ENCODE measurements at regions of chr2 and their contacts with region 1.

Region 1: GRCh38 chr2:16608661-16609643 is 56.7 kb downstream of the CYRIA start:
- DNase-seq: peak; percentile 86
- H3K4me3 ChIP-seq: peak overlapping the region in 2 of 3 experiments; percentile 21 to 57
- H3K27ac ChIP-seq: peak overlapping the region; percentile 21
- H3K4me1 ChIP-seq: peaks cover 8% of the 10 kb centered on the region
- H3K27me3 ChIP-seq: no peaks in the 10 kb centered on the region
- CTCF ChIP-seq: peak; percentile 80 to 98
- POLR2A ChIP-seq: no peak

Region 2: GRCh38 chr2:15730545-15731212 is 878.3 kb before region 1 on chr2:
- CTCF ChIA-PET with region 1: no interaction called
- POLR2A ChIA-PET with region 1: no interaction called
- dilution Hi-C with region 1: no loop called
- intact Hi-C with region 1: loop called (anchors 10 kb)
- DNase-seq: peak; percentile 97
- H3K4me3 ChIP-seq: no peak overlapping the region
- H3K27ac ChIP-seq: peak overlapping the region; percentile 24
- H3K4me1 ChIP-seq: peaks cover 31% of the 10 kb centered on the region
- H3K27me3 ChIP-seq: peaks cover 0 to 1% of the 10 kb centered on the region in 2 experiments
- CTCF ChIP-seq: no peak
- POLR2A ChIP-seq: peak; percentile 24

Region 3: GRCh38 chr2:16553226-16553625 is 55.7 kb before region 1 on chr2:
- CTCF ChIA-PET with region 1: interaction called, 33 read pairs
- POLR2A ChIA-PET with region 1: no interaction called
- dilution Hi-C with region 1: no loop called
- intact Hi-C with region 1: loop called (anchors 1 kb)
- DNase-seq: peak; percentile 51
- H3K4me3 ChIP-seq: no peak overlapping the region
- H3K27ac ChIP-seq: no peak overlapping the region
- H3K4me1 ChIP-seq: no peaks in the 10 kb centered on the region
- H3K27me3 ChIP-seq: no peaks in the 10 kb centered on the region
- CTCF ChIP-seq: peak; percentile 66 to 71
- POLR2A ChIP-seq: no peak

Region 4: DNA sequence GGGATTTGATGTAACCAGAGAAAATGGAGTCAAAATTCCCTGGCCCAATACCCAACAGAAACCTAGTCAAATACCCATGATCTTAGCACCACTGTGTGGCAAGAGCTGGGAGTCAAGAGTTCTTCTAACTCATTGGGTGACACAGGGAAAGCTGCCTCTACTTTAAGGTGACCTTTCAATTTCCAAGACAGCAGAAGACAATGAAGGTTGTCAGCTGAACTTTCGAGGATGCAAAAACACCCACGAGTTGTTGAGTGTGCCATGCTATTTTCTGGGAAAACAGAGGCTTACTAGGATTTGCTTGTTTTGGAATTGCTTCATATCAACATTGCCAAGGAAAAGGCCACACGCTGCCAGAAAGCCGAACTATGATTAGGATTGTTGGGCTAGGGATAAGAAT is 118.3 kb after region 1 on chr2:
- CTCF ChIA-PET with region 1: interaction called, 30 read pairs
- POLR2A ChIA-PET with region 1: no interaction called
- dilution Hi-C with region 1: no loop called
- intact Hi-C with region 1: loop called (anchors 1 kb)
- DNase-seq: peak; percentile 56
- H3K4me3 ChIP-seq: no peak overlapping the region
- H3K27ac ChIP-seq: no peak overlapping the region
- H3K4me1 ChIP-seq: no peaks in the 10 kb centered on the region
- H3K27me3 ChIP-seq: peaks cover 2 to 18% of the 10 kb centered on the region in 2 experiments
- CTCF ChIP-seq: peak; percentile 10 to 39
- POLR2A ChIP-seq: no peak

Region 5: DNA sequence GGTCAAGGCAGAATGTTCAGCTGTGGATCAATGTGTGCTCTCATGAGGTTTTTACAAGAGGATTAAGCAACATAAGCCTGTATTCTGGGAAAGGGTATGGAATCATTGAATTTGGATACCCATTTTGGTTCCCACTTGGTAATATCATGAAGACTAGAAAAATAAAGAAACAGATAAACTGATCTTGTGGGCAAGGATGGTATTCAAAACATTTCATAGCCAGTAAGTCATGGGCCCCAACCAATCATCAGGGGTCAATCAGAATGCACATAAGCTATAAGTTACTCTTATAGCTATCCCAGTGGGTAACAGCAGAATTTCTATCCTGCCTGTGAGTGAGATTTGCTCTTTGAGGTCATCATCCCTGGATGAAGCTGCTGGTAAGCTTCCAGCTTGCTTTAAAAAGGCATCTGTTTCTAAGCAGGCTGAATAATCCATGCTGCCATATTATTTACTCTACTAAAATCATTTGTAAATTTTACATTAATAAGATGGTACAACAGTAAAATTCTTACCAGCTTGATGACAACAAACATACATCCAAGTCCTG is 618.1 kb after region 1 on chr2:
- CTCF ChIA-PET with region 1: no interaction called
- POLR2A ChIA-PET with region 1: no interaction called
- dilution Hi-C with region 1: no loop called
- intact Hi-C with region 1: no loop called
- DNase-seq: no peak
- H3K4me3 ChIP-seq: no peak overlapping the region
- H3K27ac ChIP-seq: no peak overlapping the region
- H3K4me1 ChIP-seq: no peaks in the 10 kb centered on the region
- H3K27me3 ChIP-seq: no peaks in the 10 kb centered on the region
- CTCF ChIP-seq: no peak
- POLR2A ChIP-seq: no peak

Region 6: GRCh38 chr2:17309741-17310339 is 700.9 kb after region 1 on chr2:
- CTCF ChIA-PET with region 1: no interaction called
- POLR2A ChIA-PET with region 1: no interaction called
- dilution Hi-C with region 1: no loop called
- intact Hi-C with region 1: loop called (anchors 10 kb)
- DNase-seq: peak; percentile 24
- H3K4me3 ChIP-seq: no peak overlapping the region
- H3K27ac ChIP-seq: no peak overlapping the region
- H3K4me1 ChIP-seq: no peaks in the 10 kb centered on the region
- H3K27me3 ChIP-seq: no peaks in the 10 kb centered on the region
- CTCF ChIP-seq: peak; percentile 44 to 57
- POLR2A ChIP-seq: no peak

Measured in endothelial cell of umbilical vein (primary cell).